Psoas muscle (tissue), 8 donors: ENCODE measurements at regions of chr16 and their contacts with region 1.

Region 1: DNA sequence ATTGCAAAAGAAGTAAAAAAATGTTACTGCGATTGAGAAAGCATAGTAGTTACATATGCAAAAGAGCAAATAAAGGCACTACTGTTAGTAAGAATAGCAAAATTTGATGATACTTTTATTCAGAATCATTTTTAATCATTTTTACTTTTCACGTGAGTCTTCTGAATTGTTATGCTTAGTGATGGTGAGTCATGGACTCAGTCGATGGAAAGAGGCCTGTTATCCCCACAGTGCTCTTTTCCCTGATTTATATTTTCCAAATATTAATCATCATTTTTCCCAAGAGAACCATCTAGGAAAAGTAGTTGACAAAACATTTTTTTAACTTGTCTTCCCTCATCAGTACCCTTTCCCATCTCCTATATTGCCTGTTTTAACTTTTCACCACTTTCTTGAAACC is 181.1 kb downstream of the CHD9 start:
- DNase-seq: no peak
- ATAC-seq: no peak
- H3K4me3 ChIP-seq: no peak overlapping the region
- H3K27ac ChIP-seq: no peak overlapping the region
- H3K4me1 ChIP-seq: no peaks in the 10 kb centered on the region
- H3K27me3 ChIP-seq: no peaks in the 10 kb centered on the region
- CTCF ChIP-seq: no peak

Region 2: DNA sequence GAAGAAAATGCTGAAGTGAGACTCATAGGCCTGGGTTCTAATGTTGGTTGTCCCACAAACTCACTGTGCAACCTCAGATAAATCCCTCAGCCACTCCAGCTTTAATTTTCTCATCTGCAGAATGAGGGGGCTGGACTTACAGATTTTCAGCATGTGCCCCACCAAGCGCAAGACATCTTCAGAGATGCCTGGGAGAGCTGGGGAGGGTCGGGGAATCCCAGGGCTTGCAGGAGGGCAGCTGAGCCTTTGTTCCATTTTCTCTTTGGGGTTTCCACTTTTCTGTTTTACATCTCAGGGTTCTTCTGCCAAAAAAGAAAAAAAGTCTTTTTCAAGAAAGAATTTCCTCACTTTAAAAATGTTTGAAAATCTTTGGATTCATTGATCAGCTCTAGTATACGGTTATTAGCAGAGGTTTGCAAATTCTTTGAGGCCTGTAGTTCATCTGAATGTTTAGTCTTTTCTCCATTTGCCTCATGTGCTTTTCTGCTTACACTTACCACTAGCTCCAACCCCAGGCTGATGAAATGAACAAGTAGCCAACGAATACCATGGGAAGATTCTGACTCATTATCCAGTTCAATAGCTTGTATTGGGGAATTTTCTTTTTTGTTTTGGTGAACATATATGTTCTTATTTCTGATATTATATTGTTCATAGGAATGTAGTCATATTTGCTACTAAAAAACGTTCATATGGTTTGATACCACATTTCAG is 124.6 kb before region 1 on chr16:
- intact Hi-C with region 1: no loop called
- DNase-seq: no peak
- ATAC-seq: no peak
- H3K4me3 ChIP-seq: no peak overlapping the region
- H3K27ac ChIP-seq: no peak overlapping the region
- H3K4me1 ChIP-seq: no peaks in the 10 kb centered on the region
- H3K27me3 ChIP-seq: no peaks in the 10 kb centered on the region
- CTCF ChIP-seq: no peak

Region 3: GRCh38 chr16:53191413-53191812 is 44.4 kb before region 1 on chr16:
- intact Hi-C with region 1: no loop called
- DNase-seq: no peak
- ATAC-seq: no peak
- H3K4me3 ChIP-seq: no peak overlapping the region
- H3K27ac ChIP-seq: no peak overlapping the region
- H3K4me1 ChIP-seq: no peaks in the 10 kb centered on the region
- H3K27me3 ChIP-seq: no peaks in the 10 kb centered on the region
- CTCF ChIP-seq: no peak

Region 4: GRCh38 chr16:53282975-53283946 is 47.4 kb after region 1 on chr16:
- intact Hi-C with region 1: loop called in 1 of 2 experiments (anchors 10 kb)
- DNase-seq: no peak
- ATAC-seq: peak in 2 of 4 donors; percentile 37 to 68
- H3K4me3 ChIP-seq: no peak overlapping the region
- H3K27ac ChIP-seq: no peak overlapping the region
- H3K4me1 ChIP-seq: no peaks in the 10 kb centered on the region
- H3K27me3 ChIP-seq: no peaks in the 10 kb centered on the region
- CTCF ChIP-seq: peak; percentile 48

Region 5: GRCh38 chr16:53309457-53309856 is 73.6 kb after region 1 on chr16:
- intact Hi-C with region 1: loop called in 1 of 2 experiments (anchors 5 kb)
- DNase-seq: no peak
- ATAC-seq: no peak
- H3K4me3 ChIP-seq: no peak overlapping the region
- H3K27ac ChIP-seq: no peak overlapping the region
- H3K4me1 ChIP-seq: peaks cover 9% of the 10 kb centered on the region
- H3K27me3 ChIP-seq: no peaks in the 10 kb centered on the region
- CTCF ChIP-seq: no peak

Region 6: DNA sequence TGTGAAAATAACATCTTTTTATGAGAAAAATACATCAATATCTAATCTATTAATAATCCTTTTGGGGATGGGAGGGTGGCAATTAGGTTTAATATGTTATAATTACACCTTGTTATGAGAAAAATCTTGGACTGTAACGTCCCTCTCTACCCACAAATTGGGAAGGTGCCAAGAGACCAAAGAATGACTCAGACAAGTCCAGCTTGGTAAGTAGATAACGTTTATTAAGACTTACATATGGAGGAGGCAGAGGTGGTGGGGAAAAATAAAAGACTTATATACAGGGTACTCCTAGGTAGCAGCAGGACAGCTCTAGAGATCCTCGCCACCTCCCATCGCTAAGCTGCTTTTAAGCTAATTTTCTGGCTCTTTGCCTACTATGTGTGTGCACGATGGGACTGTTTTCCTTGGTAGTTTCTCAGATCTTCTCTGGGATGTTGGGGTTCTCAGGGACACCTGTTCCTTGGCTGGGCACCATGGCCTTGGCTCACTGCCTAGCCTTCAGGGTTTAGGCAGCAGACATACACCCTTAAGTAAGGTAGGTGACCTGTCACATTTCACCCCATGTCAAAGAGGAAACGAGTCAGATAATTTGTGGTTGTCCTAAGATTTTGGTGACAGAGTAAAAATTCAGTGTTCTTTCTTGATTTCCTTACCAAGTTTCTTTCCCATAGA is 229.9 kb after region 1 on chr16:
- intact Hi-C with region 1: loop called (anchors 10 kb)
- DNase-seq: no peak
- ATAC-seq: peak in 2 of 4 donors; percentile 53 to 60
- H3K4me3 ChIP-seq: no peak overlapping the region
- H3K27ac ChIP-seq: no peak overlapping the region
- H3K4me1 ChIP-seq: no peaks in the 10 kb centered on the region
- H3K27me3 ChIP-seq: no peaks in the 10 kb centered on the region
- CTCF ChIP-seq: no peak